ENCODE measurements at regions of chr1 and their contacts with region 1.

Region 1: GRCh38 chr1:166910396-166910994 is 34.4 kb upstream of the TADA1 start:
- DNase-seq: peak in 2 of 3 donors; percentile 56 to 92
- ATAC-seq: peak; percentile 100
- H3K4me3 ChIP-seq: no peak overlapping the region
- H3K4me1 ChIP-seq: no peaks in the 10 kb centered on the region
- CTCF ChIP-seq: peak; percentile 74

Region 2: GRCh38 chr1:167059045-167059808 is 148.7 kb after region 1 on chr1:
- intact Hi-C with region 1: loop called (anchors 2 to 5 kb)
- DNase-seq: peak in 2 of 3 donors; percentile 76 to 85
- ATAC-seq: peak; percentile 78
- H3K4me3 ChIP-seq: no peak overlapping the region
- H3K4me1 ChIP-seq: no peaks in the 10 kb centered on the region
- CTCF ChIP-seq: peak; percentile 81